Dorsolateral prefrontal cortex (tissue), 120 donors: ENCODE measurements at regions of chr1 and their contacts with region 1.

Region 1: GRCh38 chr1:154574716-154575115 is 7.1 kb downstream of the CHRNB2 start:
- DNase-seq: peak in 7 of 10 donors; percentile 41 to 86 (median 68)
- H3K4me3 ChIP-seq: peak overlapping the region in 1 of 59 donors; percentile 5
- H3K27ac ChIP-seq: peak overlapping the region in 11 of 59 donors; percentile 19 to 55 (median 41)
- H3K27me3 ChIP-seq: no peaks in the 10 kb centered on the region
- CTCF ChIP-seq: no peak

Region 2: DNA sequence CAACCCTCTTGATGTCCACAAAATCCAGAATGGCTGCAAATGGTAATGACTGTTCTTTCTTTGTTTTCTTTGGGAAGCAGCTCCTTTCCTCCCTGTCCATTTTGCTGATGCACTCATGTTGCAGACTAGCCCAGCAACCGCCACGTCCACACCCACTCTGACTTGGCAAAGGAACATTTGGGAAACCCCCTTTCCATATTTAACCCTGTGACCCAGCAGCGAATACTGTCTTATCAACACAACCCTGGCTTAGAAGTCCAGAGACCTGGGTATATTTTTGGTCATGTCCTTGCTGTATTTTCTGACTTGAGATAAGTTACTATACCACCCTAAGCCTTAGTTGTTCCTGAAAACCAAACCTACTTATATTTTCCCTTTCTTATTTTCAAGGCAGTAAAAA is 54.4 kb before region 1 on chr1:
- intact Hi-C with region 1: no loop called
- DNase-seq: no peak
- H3K4me3 ChIP-seq: no peak overlapping the region
- H3K27ac ChIP-seq: no peak overlapping the region
- H3K27me3 ChIP-seq: peaks cover 0 to 4% (median 0%) of the 10 kb centered on the region in 45 donors
- CTCF ChIP-seq: no peak

Region 3: DNA sequence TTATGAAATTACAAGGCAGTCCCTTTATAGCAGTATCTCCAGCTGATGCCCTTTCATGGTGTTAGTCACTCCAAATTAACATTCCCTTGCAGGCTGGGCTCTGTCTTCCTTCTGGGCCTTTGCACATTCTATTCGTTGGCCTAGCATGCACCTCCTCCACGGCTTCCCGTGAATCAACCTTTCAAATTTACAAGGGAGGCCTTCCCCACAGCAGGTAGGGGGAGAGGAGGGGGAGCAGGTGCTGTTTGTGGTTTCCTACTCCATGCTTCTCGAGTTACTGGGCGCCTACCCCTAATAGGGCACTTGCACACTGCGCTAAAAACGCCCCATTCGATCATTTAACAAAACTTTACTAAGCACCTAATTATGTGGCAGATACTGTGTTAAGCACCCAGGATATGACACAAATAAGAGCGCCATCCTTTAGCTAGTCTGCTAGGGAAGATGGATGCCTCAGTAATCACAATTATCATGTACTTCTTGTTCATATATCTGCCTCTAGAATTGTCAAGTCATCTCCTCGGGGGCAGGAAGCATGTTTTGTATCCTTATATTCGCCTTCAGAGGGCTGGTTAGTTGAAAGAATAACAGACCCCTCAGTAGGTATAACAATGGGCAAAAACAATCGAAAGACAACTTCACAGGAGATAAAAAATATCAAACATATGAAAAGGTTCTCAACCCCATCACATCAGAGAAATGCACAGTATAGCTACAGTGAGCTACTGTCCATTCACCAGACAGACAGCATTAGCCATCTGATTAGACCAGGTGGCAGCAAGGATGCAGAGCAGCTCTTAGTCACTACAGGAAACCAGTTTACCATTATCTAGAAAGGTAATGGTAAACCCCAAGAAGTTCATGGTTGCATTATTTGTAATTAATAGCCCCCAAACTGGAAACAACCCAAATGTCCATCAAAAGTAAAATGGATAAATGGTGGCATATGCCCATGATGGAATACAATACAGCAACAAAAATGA is 35.0 kb after region 1 on chr1:
- intact Hi-C with region 1: loop called in 1 of 2 experiments (anchors 5 kb)
- DNase-seq: no peak
- H3K4me3 ChIP-seq: peak overlapping the region in 11 of 59 donors; percentile 70 to 94 (median 90)
- H3K27ac ChIP-seq: peak overlapping the region in 56 of 59 donors; percentile 49 to 99 (median 95)
- H3K27me3 ChIP-seq: no peaks in the 10 kb centered on the region
- CTCF ChIP-seq: no peak